ENCODE measurements at regions of chr2 and their contacts with region 1.

Region 1: GRCh38 chr2:173210270-173211196 is 134.9 kb downstream of the MAP3K20 start:
- DNase-seq: peak; percentile 2 to 77 (median 44)
- ATAC-seq: peak; percentile 77
- H3K4me3 ChIP-seq: no peak overlapping the region
- H3K4me3 Mint-ChIP-seq: no peak overlapping the region
- H3K27ac ChIP-seq: no peak overlapping the region
- H3K27ac Mint-ChIP-seq: no peak overlapping the region
- H3K4me1 ChIP-seq: no peaks in the 10 kb centered on the region
- H3K4me1 Mint-ChIP-seq: peaks cover 1% of the 10 kb centered on the region
- H3K27me3 ChIP-seq: no peaks in the 10 kb centered on the region
- H3K27me3 Mint-ChIP-seq: peaks cover 11% of the 10 kb centered on the region
- CTCF ChIP-seq: peak; percentile 91

Region 2: GRCh38 chr2:172806493-172806892 is 404.0 kb before region 1 on chr2:
- CTCF ChIA-PET with region 1: interaction called, 7 read pairs
- POLR2A ChIA-PET with region 1: no interaction called
- intact Hi-C with region 1: loop called in 1 of 2 experiments (anchors 2 kb)
- DNase-seq: peak in 2 of 9 experiments; percentile 19 to 38
- ATAC-seq: no peak
- H3K4me3 ChIP-seq: no peak overlapping the region
- H3K4me3 Mint-ChIP-seq: no peak overlapping the region
- H3K27ac ChIP-seq: no peak overlapping the region
- H3K27ac Mint-ChIP-seq: no peak overlapping the region
- H3K4me1 ChIP-seq: no peaks in the 10 kb centered on the region
- H3K4me1 Mint-ChIP-seq: peaks cover 2% of the 10 kb centered on the region
- H3K27me3 ChIP-seq: peaks cover 0 to 4% of the 10 kb centered on the region in 2 experiments
- H3K27me3 Mint-ChIP-seq: no peaks in the 10 kb centered on the region
- CTCF ChIP-seq: peak; percentile 82

Region 3: GRCh38 chr2:172864182-172864581 is 346.4 kb before region 1 on chr2:
- CTCF ChIA-PET with region 1: no interaction called
- POLR2A ChIA-PET with region 1: no interaction called
- intact Hi-C with region 1: loop called (anchors 1 to 2 kb)
- DNase-seq: peak in 5 of 9 experiments; percentile 6 to 52 (median 27)
- ATAC-seq: no peak
- H3K4me3 ChIP-seq: no peak overlapping the region
- H3K4me3 Mint-ChIP-seq: no peak overlapping the region
- H3K27ac ChIP-seq: no peak overlapping the region
- H3K27ac Mint-ChIP-seq: no peak overlapping the region
- H3K4me1 ChIP-seq: no peaks in the 10 kb centered on the region
- H3K4me1 Mint-ChIP-seq: no peaks in the 10 kb centered on the region
- H3K27me3 ChIP-seq: no peaks in the 10 kb centered on the region
- H3K27me3 Mint-ChIP-seq: peaks cover 16% of the 10 kb centered on the region
- CTCF ChIP-seq: no peak

Region 4: GRCh38 chr2:172977270-172978062 is 233.1 kb before region 1 on chr2:
- CTCF ChIA-PET with region 1: no interaction called
- POLR2A ChIA-PET with region 1: no interaction called
- intact Hi-C with region 1: loop called (anchors 1 to 5 kb)
- DNase-seq: peak in 3 of 9 experiments; percentile 37 to 58 (median 37)
- ATAC-seq: peak; percentile 85
- H3K4me3 ChIP-seq: no peak overlapping the region
- H3K4me3 Mint-ChIP-seq: no peak overlapping the region
- H3K27ac ChIP-seq: no peak overlapping the region
- H3K27ac Mint-ChIP-seq: no peak overlapping the region
- H3K4me1 ChIP-seq: peaks cover 5% of the 10 kb centered on the region
- H3K4me1 Mint-ChIP-seq: peaks cover 8% of the 10 kb centered on the region
- H3K27me3 ChIP-seq: no peaks in the 10 kb centered on the region
- H3K27me3 Mint-ChIP-seq: peaks cover 4% of the 10 kb centered on the region
- CTCF ChIP-seq: no peak

Region 5: GRCh38 chr2:173151671-173152398 is 58.7 kb before region 1 on chr2:
- CTCF ChIA-PET with region 1: no interaction called
- POLR2A ChIA-PET with region 1: no interaction called
- intact Hi-C with region 1: no loop called
- DNase-seq: peak in 1 of 9 experiments; percentile 21
- ATAC-seq: no peak
- H3K4me3 ChIP-seq: no peak overlapping the region
- H3K4me3 Mint-ChIP-seq: no peak overlapping the region
- H3K27ac ChIP-seq: no peak overlapping the region
- H3K27ac Mint-ChIP-seq: no peak overlapping the region
- H3K4me1 ChIP-seq: no peaks in the 10 kb centered on the region
- H3K4me1 Mint-ChIP-seq: peaks cover 8% of the 10 kb centered on the region
- H3K27me3 ChIP-seq: no peaks in the 10 kb centered on the region
- H3K27me3 Mint-ChIP-seq: no peaks in the 10 kb centered on the region
- CTCF ChIP-seq: no peak

Region 6: GRCh38 chr2:173264603-173265366 is 54.3 kb after region 1 on chr2:
- CTCF ChIA-PET with region 1: no interaction called
- POLR2A ChIA-PET with region 1: no interaction called
- intact Hi-C with region 1: no loop called
- DNase-seq: peak in 5 of 9 experiments; percentile 16 to 61 (median 39)
- ATAC-seq: peak; percentile 88
- H3K4me3 ChIP-seq: peak overlapping the region; percentile 15 to 33
- H3K4me3 Mint-ChIP-seq: peak overlapping the region; percentile 74
- H3K27ac ChIP-seq: peak overlapping the region in 1 of 2 experiments; percentile 43
- H3K27ac Mint-ChIP-seq: peak overlapping the region; percentile 73
- H3K4me1 ChIP-seq: peaks cover 6% of the 10 kb centered on the region
- H3K4me1 Mint-ChIP-seq: peaks cover 13% of the 10 kb centered on the region
- H3K27me3 ChIP-seq: no peaks in the 10 kb centered on the region
- H3K27me3 Mint-ChIP-seq: no peaks in the 10 kb centered on the region
- CTCF ChIP-seq: no peak

Region 7: GRCh38 chr2:173448938-173449471 is 238.5 kb after region 1 on chr2:
- CTCF ChIA-PET with region 1: no interaction called
- POLR2A ChIA-PET with region 1: no interaction called
- intact Hi-C with region 1: no loop called
- DNase-seq: peak; percentile 16 to 76 (median 53)
- ATAC-seq: peak; percentile 40
- H3K4me3 ChIP-seq: no peak overlapping the region
- H3K4me3 Mint-ChIP-seq: peak overlapping the region; percentile 60
- H3K27ac ChIP-seq: no peak overlapping the region
- H3K27ac Mint-ChIP-seq: peak overlapping the region; percentile 60
- H3K4me1 ChIP-seq: peaks cover 8% of the 10 kb centered on the region
- H3K4me1 Mint-ChIP-seq: peaks cover 20% of the 10 kb centered on the region
- H3K27me3 ChIP-seq: no peaks in the 10 kb centered on the region
- H3K27me3 Mint-ChIP-seq: peaks cover 4% of the 10 kb centered on the region
- CTCF ChIP-seq: peak; percentile 28

Measured in CD8-positive, alpha-beta T cell (primary cell).